ENCODE measurements at regions of chr4 and their contacts with region 1.

Region 1: GRCh38 chr4:16264798-16265197 is 38.5 kb upstream of the TAPT1 start:
- DNase-seq: no peak
- ATAC-seq: peak; percentile 65
- H3K4me3 Mint-ChIP-seq: no peak overlapping the region
- H3K27ac Mint-ChIP-seq: no peak overlapping the region
- H3K4me1 Mint-ChIP-seq: peaks cover 7% of the 10 kb centered on the region
- H3K27me3 Mint-ChIP-seq: peaks cover 2% of the 10 kb centered on the region

Region 2: DNA sequence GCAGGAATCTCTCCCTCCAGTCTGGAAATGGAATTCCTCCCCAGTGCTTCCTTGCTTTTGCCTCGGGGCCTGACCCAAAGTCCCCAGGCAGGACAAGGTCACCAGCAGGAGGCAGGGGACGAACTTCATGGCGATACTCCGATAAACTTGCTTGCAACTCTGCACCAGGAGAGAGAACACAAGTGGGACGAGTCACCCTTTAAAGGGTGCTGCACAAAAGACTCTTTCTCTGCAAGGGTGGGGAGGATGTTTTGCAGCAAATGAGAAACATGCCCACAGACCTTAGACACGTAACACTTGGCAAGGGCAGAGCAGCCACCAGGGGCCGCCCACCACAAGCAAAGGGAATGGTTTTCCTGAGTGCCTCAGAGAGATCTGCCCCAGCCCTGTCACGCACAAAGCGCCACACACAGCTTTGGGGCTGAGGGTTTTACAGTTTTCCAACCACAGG is 301.8 kb before region 1 on chr4 and contains the start of gene FGFBP2:
- CTCF ChIA-PET with region 1: interaction called, 13 read pairs
- POLR2A ChIA-PET with region 1: no interaction called
- DNase-seq: peak; percentile 86
- ATAC-seq: peak; percentile 93
- H3K4me3 Mint-ChIP-seq: peak within 1 kb of the TSS; percentile 71
- H3K27ac Mint-ChIP-seq: peak within 1 kb of the TSS; percentile 76
- H3K4me1 Mint-ChIP-seq: peaks cover 34% of the 10 kb centered on the region
- H3K27me3 Mint-ChIP-seq: peaks cover 18% of the 10 kb centered on the region
- total RNA-seq, gene FGFBP2: 12.0 to 13.0 TPM

Region 3: DNA sequence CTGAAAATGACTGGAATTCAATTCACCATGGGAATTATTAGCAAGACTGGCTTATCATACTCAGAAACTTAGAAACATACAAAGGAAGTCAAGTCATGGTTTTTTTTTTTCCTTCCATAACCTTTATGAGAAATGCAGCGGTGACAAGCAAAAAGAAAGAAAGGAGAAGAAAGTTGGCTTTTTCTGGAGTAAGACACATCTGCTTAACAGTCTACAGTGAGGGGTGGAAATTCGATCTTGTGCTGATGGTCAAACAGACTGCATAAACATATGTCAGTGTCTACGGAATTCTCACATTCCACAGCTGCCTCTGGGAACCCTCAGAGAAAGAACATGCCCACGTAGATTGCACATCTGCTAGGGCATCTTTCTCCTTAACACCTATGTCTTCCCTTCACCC is 235.5 kb before region 1 on chr4:
- CTCF ChIA-PET with region 1: interaction called, 24 read pairs
- POLR2A ChIA-PET with region 1: no interaction called
- DNase-seq: no peak
- ATAC-seq: no peak
- H3K4me3 Mint-ChIP-seq: no peak overlapping the region
- H3K27ac Mint-ChIP-seq: no peak overlapping the region
- H3K4me1 Mint-ChIP-seq: no peaks in the 10 kb centered on the region
- H3K27me3 Mint-ChIP-seq: peaks cover 18% of the 10 kb centered on the region

Region 4: GRCh38 chr4:16196478-16197393 is 68.1 kb before region 1 on chr4:
- CTCF ChIA-PET with region 1: interaction called, 17 read pairs
- POLR2A ChIA-PET with region 1: no interaction called
- DNase-seq: no peak
- ATAC-seq: no peak
- H3K4me3 Mint-ChIP-seq: no peak overlapping the region
- H3K27ac Mint-ChIP-seq: no peak overlapping the region
- H3K4me1 Mint-ChIP-seq: peaks cover 16% of the 10 kb centered on the region
- H3K27me3 Mint-ChIP-seq: no peaks in the 10 kb centered on the region

Region 5: DNA sequence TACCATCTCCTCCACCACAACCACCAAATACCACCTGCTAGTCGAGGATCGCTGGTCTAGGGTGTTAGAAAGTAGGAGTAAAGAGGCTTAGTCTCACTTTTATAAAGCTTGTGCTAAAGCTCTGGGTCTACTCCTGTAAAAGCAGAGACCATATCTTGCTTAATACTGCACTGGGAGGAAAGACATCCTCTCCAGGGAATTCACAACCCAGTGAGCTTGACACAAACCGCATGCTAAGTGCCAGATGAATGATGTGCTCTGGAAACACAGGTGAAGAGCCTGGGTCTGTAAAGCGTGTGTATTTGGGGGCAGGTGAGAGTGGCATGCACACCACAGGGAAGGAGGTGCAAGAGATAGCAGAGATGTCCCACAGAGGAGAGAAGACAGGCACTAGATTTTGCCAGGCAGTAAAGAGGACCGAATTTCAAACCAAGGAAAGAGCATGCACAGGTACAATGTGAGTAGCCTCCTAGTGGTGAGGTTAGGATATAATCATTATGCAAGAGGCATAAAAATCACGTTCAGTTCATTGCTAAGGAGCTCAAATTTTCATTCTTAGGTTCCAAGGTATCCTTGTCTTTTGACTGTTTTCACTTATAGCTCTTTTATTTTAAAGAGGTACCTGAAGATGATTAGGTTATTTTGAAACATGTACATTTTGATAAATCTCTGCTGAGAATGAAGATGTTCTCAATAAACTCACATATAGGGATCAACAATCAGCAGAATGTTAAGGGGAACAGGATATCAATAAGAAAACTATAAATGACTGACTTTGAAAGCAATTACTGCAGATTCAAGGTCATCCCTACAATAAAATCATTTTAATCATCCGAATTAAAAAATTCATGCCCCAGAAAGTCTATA is 59.3 kb before region 1 on chr4:
- CTCF ChIA-PET with region 1: interaction called, 17 read pairs
- POLR2A ChIA-PET with region 1: no interaction called
- DNase-seq: no peak
- ATAC-seq: peak; percentile 82
- H3K4me3 Mint-ChIP-seq: no peak overlapping the region
- H3K27ac Mint-ChIP-seq: no peak overlapping the region
- H3K4me1 Mint-ChIP-seq: peaks cover 26% of the 10 kb centered on the region
- H3K27me3 Mint-ChIP-seq: no peaks in the 10 kb centered on the region

Region 6: GRCh38 chr4:16360701-16361262 is 96.0 kb after region 1 on chr4:
- CTCF ChIA-PET with region 1: no interaction called
- POLR2A ChIA-PET with region 1: no interaction called
- DNase-seq: no peak
- ATAC-seq: no peak
- H3K4me3 Mint-ChIP-seq: no peak overlapping the region
- H3K27ac Mint-ChIP-seq: no peak overlapping the region
- H3K4me1 Mint-ChIP-seq: no peaks in the 10 kb centered on the region
- H3K27me3 Mint-ChIP-seq: no peaks in the 10 kb centered on the region

Measured in activated CD8-positive, alpha-beta T cell treated with anti-CD3 and anti-CD28 coated beads, Interleukin-2, amount 10 ng/mL, durations not matched to agents 7 days and 5 days (primary cell).